Transverse colon (tissue), 4 donors: ENCODE measurements at regions of chr14 and their contacts with region 1.

Region 1: GRCh38 chr14:52801015-52801712 is 9.8 kb upstream of the GNPNAT1 start:
- DNase-seq: no peak
- H3K4me3 ChIP-seq: no peak overlapping the region
- H3K27ac ChIP-seq: peak overlapping the region; percentile 5 to 41 (median 31)
- H3K4me1 ChIP-seq: no peaks in the 10 kb centered on the region
- H3K27me3 ChIP-seq: no peaks in the 10 kb centered on the region
- CTCF ChIP-seq: no peak
- EP300 ChIP-seq: no peak
- POLR2A ChIP-seq: no peak

Region 2: DNA sequence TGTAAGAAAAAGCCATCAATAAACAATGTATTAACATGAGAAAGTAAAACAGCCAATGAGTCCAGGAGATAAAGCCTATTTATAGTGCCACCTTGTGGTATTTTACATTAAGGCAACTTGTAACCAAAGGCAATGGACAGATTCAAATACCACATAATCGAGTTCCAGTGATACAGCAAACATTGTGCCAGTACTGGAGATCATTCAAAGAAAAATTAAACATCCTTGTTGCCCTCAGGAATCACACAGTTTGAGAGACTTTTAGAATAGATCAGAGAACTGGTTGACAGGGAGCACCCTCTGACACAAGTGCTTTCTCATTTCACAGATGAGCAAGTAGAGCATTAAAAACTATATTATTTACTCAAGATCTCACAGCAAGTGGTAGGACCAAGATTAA is 253.8 kb after region 1 on chr14:
- in situ Hi-C with region 1: loop called in 1 of 4 experiments (anchors 25 kb)
- intact Hi-C with region 1: no loop called
- DNase-seq: no peak
- H3K4me3 ChIP-seq: no peak overlapping the region
- H3K27ac ChIP-seq: no peak overlapping the region
- H3K4me1 ChIP-seq: no peaks in the 10 kb centered on the region
- H3K27me3 ChIP-seq: no peaks in the 10 kb centered on the region
- CTCF ChIP-seq: peak; percentile 58 to 70 (median 66)
- EP300 ChIP-seq: no peak
- POLR2A ChIP-seq: no peak

Region 3: GRCh38 chr14:53167602-53168328 is 366.6 kb after region 1 on chr14:
- in situ Hi-C with region 1: no loop called
- intact Hi-C with region 1: no loop called
- DNase-seq: no peak
- H3K4me3 ChIP-seq: no peak overlapping the region
- H3K27ac ChIP-seq: peak overlapping the region in 1 of 4 donors; percentile 12
- H3K4me1 ChIP-seq: no peaks in the 10 kb centered on the region
- H3K27me3 ChIP-seq: no peaks in the 10 kb centered on the region
- CTCF ChIP-seq: no peak
- EP300 ChIP-seq: no peak
- POLR2A ChIP-seq: no peak

Region 4: GRCh38 chr14:53295985-53296582 is 494.9 kb after region 1 on chr14:
- in situ Hi-C with region 1: loop called (anchors 25 kb)
- intact Hi-C with region 1: no loop called
- DNase-seq: no peak
- H3K4me3 ChIP-seq: no peak overlapping the region
- H3K27ac ChIP-seq: no peak overlapping the region
- H3K4me1 ChIP-seq: no peaks in the 10 kb centered on the region
- H3K27me3 ChIP-seq: no peaks in the 10 kb centered on the region
- CTCF ChIP-seq: peak; percentile 53 to 79 (median 69)
- EP300 ChIP-seq: no peak
- POLR2A ChIP-seq: no peak

Region 5: DNA sequence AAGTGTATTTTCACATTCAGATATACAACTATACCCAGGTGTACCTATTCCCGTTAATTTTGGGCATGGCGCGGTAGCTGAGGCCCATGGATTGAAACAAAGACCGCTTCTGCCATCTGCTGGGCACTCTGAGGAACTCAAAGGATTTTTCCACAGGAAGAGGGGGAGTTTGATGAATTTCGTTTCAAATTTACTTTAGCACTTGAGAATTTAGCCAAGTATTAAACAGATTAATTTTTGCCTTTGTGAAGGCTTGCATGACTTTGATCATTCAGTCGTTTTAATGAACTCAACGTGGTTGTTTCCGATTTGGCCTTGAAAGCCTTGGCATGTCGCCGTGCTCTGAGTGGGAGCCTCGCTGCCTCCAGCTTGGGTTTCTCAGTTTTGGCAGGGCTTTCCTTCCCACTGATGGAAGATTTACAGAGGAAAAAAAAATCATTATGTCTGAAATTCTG is 505.1 kb after region 1 on chr14:
- in situ Hi-C with region 1: loop called in 1 of 4 experiments (anchors 25 kb)
- intact Hi-C with region 1: no loop called
- DNase-seq: peak; percentile 22
- H3K4me3 ChIP-seq: peak overlapping the region in 2 of 4 donors; percentile 12 to 44
- H3K27ac ChIP-seq: peak overlapping the region; percentile 23 to 49 (median 42)
- H3K4me1 ChIP-seq: peaks cover 0 to 17% (median 2%) of the 10 kb centered on the region in 4 donors
- H3K27me3 ChIP-seq: no peaks in the 10 kb centered on the region
- CTCF ChIP-seq: peak; percentile 68 to 79 (median 69)
- EP300 ChIP-seq: no peak
- POLR2A ChIP-seq: no peak